ENCODE measurements at regions of chr2 and their contacts with region 1.

Region 1: DNA sequence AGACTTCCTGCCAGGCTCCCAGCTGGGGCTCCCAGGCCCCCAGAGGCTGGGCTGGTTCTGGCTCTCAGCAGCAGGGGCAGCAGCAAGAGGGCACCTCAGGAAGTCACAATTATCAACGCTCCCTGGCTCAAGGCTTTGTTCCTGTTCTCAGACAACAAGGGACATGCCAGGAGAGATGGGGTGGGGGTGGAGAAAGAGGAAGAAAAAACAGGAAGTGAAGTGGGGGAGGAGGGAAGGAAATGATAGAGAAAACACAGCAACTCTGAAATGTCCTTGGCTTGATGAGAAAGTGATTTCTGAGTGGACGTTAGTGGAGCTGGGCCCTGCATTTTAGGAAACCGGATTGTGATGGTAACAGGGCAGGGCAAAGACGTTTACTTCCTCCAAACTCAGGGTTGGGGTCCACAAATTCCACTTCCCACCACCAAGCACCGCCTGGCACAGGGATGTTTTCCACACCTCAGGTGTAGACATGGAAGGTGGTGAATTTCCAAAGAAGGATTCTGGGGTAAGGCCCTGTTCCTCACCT is 40.4 kb downstream of the CYRIA start:
- DNase-seq: peak; percentile 26
- H3K4me3 ChIP-seq: no peak overlapping the region
- H3K27ac ChIP-seq: peak overlapping the region; percentile 58 to 70 (median 64)
- H3K4me1 ChIP-seq: peaks cover 0 to 41% (median 10%) of the 10 kb centered on the region in 4 donors
- H3K27me3 ChIP-seq: no peaks in the 10 kb centered on the region
- CTCF ChIP-seq: no peak
- EP300 ChIP-seq: no peak
- POLR2A ChIP-seq: no peak

Region 2: DNA sequence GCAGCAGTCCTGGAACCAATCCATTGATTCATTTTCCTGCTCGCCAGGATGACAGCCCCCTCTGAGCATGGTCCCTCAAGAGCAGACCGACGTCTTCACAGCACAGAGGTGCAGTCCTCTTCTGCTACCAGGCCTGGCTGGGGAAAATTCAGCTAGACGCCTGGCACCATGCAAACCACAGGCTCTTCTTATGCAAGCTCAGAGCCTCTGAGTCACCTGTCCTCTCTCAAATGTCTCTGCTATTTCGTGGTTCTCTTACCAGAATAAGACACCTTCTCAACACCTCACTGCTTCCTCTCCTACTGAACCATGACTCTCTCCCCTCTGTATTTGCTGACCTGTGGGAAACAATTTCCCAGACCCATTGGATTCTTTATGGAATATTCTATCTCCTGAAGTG is 120.2 kb after region 1 on chr2:
- in situ Hi-C with region 1: loop called in 1 of 4 experiments (anchors 10 kb)
- intact Hi-C with region 1: loop called (anchors 5 kb)
- DNase-seq: no peak
- H3K4me3 ChIP-seq: no peak overlapping the region
- H3K27ac ChIP-seq: no peak overlapping the region
- H3K4me1 ChIP-seq: no peaks in the 10 kb centered on the region
- H3K27me3 ChIP-seq: no peaks in the 10 kb centered on the region
- CTCF ChIP-seq: no peak
- EP300 ChIP-seq: no peak
- POLR2A ChIP-seq: no peak

Measured in transverse colon (tissue), 4 donors.